ENCODE measurements at regions of chr20 and their contacts with region 1.

Region 1: GRCh38 chr20:57498425-57499400 is 26.2 kb downstream of the CTCFL start:
- DNase-seq: peak; percentile 67
- ATAC-seq: peak; percentile 70
- H3K4me3 ChIP-seq: no peak overlapping the region
- H3K27ac ChIP-seq: no peak overlapping the region
- H3K4me1 ChIP-seq: peaks cover 15% of the 10 kb centered on the region
- H3K27me3 ChIP-seq: no peaks in the 10 kb centered on the region
- CTCF ChIP-seq: peak; percentile 66

Region 2: GRCh38 chr20:57089691-57090150 is 409.0 kb before region 1 on chr20:
- CTCF ChIA-PET with region 1: no interaction called
- POLR2A ChIA-PET with region 1: no interaction called
- intact Hi-C with region 1: loop called (anchors 10 kb)
- DNase-seq: peak; percentile 83
- ATAC-seq: peak; percentile 93
- H3K4me3 ChIP-seq: no peak overlapping the region
- H3K27ac ChIP-seq: no peak overlapping the region
- H3K4me1 ChIP-seq: no peaks in the 10 kb centered on the region
- H3K27me3 ChIP-seq: peaks cover 17% of the 10 kb centered on the region
- CTCF ChIP-seq: peak; percentile 100

Region 3: DNA sequence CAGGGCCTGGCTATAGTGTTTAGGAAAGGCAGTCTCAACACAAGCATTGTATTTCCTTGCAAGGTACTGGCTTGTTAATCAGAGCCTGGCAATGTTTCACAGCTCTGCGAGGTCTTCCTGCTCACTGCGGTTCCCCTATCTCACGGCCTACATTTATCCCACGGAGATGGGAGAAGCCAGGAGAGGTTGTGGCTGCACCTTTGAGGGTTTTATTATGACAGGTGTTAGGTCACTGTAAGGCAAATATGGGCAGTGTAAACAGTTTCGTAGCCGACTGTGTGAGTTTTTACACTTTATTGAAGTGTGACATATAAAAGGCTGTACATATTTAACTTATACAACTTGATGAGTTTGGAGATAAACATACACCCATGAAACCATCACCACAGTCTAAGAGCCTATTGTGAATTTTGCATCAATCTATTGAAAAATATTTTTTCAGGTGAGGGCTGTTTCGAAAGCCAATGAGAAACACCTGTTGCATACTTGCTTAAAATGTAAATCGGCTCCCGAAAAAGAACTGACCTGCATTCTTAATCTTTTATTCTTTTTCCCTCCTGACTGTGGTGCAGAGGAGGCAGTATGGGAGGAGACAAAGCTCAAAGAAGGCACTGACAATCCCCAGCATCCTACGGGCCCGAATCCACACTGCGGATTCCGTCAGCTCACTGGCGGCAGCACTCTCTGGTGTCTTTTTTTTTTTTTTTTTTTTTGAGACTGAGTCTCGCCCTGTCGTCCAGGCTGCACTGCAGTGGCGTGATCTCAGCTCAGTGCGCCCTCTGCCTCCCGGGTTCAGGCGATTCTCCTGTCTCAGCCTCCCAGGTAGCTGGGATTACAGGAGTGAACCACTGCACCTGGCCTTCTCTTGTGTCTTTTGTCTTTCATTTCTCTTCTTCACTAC is 115.0 kb before region 1 on chr20:
- CTCF ChIA-PET with region 1: interaction called, 8 read pairs
- POLR2A ChIA-PET with region 1: no interaction called
- intact Hi-C with region 1: loop called (anchors 1 kb)
- DNase-seq: no peak
- ATAC-seq: no peak
- H3K4me3 ChIP-seq: no peak overlapping the region
- H3K27ac ChIP-seq: no peak overlapping the region
- H3K4me1 ChIP-seq: peaks cover under 1% of the 10 kb centered on the region; the same call in 1 of the 2 replicates
- H3K27me3 ChIP-seq: no peaks in the 10 kb centered on the region
- CTCF ChIP-seq: no peak

Region 4: DNA sequence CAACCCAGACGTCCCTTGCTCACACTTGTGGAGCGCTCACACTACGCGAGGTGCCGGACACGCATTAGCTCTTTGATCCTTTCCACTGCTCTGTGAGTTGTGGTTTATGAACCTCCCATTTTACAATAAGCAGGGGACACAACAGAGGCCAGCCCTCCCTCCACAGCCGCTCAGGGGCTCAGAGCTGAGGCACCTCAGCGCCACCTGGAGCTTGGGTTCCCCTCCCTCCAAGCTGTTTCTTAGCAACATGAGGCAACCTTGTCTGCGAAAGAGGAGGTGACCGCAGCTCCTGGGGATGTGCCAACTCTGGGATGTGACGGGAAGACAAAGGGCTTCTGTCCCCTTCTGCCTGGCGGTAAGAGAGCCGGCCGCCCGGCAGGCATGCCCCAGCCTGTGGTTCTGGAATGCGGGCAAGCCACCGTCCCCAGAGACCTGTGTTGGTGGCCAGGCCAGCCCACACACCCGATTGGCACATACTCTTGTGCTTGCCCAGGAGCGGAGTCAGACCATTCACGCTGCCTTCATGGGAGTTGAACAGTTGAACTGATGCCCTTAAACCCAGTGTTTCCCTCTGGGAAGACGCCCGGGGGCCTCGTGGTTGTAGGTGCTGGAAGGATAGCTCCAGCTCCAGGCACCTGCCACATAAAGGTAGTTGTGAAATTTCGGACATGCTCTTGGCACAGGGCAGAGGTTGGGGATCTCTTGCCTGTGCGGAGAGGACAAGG is 63.1 kb before region 1 on chr20:
- CTCF ChIA-PET with region 1: interaction called, 7 read pairs
- POLR2A ChIA-PET with region 1: no interaction called
- intact Hi-C with region 1: loop called (anchors 5 kb)
- DNase-seq: peak; percentile 97
- ATAC-seq: peak; percentile 78
- H3K4me3 ChIP-seq: peak overlapping the region; percentile 20; the same call in 1 of the 2 replicates
- H3K27ac ChIP-seq: peak overlapping the region; percentile 10
- H3K4me1 ChIP-seq: peaks cover 29% of the 10 kb centered on the region
- H3K27me3 ChIP-seq: no peaks in the 10 kb centered on the region
- CTCF ChIP-seq: peak; percentile 55

Region 5: DNA sequence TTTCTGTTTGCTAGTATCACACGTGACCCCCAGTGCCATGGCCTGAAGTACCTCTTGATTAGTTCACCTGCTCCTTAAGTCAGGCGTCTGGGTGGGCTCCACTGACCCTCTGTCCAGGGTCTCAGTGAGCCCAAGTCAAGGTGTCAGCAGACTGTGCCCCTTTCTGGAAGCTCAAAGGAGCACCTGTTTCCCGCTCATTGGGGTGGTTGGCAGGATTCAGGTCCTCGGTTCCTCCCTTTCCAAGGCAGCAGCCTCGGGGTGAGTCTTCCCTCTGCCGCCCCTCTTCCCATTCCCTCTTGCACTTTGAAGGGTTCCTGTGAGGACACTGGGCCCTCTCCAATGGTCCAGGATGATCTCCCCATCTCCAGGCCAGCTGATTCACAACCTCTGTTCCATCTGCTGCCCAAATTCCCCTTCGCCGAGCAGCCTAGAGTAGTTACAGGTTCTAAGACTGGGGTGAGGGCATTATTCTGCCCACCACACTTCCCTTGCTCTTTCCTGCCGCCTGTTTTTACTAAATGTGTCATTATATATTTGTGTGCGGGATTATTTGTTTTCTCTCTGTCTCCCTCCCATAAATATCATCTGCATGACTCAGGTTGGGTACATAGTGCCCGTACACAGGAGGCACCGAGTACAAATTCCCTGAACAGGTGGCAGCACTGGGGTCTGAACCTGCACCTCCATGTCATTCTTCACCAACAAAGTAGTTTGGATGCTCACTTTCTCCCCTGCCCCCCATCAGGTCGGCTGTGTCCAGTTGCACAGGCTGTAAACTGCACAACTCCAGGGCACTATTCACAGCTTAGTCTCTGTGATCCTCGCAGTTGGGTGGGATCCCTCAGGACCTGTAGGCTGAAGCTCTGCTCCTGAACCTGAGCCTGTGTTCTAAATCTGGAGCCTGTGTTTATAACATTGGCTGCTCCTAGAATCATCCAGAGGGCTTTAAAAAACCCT is 49.0 kb before region 1 on chr20:
- CTCF ChIA-PET with region 1: no interaction called
- POLR2A ChIA-PET with region 1: no interaction called
- intact Hi-C with region 1: loop called (anchors 2 kb)
- DNase-seq: peak; percentile 90
- ATAC-seq: peak; percentile 94
- H3K4me3 ChIP-seq: no peak overlapping the region; the same call in 1 of the 2 replicates
- H3K27ac ChIP-seq: no peak overlapping the region
- H3K4me1 ChIP-seq: peaks cover 20% of the 10 kb centered on the region
- H3K27me3 ChIP-seq: peaks cover 9% of the 10 kb centered on the region; the same call in 1 of the 2 replicates
- CTCF ChIP-seq: peak; percentile 33

Measured in PC-3 (cell line).